ENCODE measurements at regions of chr12 and their contacts with region 1.

Region 1: GRCh38 chr12:69570545-69571399 is 14.5 kb upstream of the CCT2 start:
- DNase-seq: peak; percentile 67
- ATAC-seq: peak; percentile 86
- H3K4me3 Mint-ChIP-seq: no peak overlapping the region
- H3K27ac Mint-ChIP-seq: no peak overlapping the region
- H3K4me1 Mint-ChIP-seq: peaks cover 16% of the 10 kb centered on the region
- H3K27me3 Mint-ChIP-seq: no peaks in the 10 kb centered on the region

Region 2: GRCh38 chr12:69024413-69024812 is 546.4 kb before region 1 on chr12:
- CTCF ChIA-PET with region 1: no interaction called
- POLR2A ChIA-PET with region 1: no interaction called
- intact Hi-C with region 1: no loop called
- DNase-seq: no peak
- ATAC-seq: no peak
- H3K4me3 Mint-ChIP-seq: no peak overlapping the region
- H3K27ac Mint-ChIP-seq: no peak overlapping the region
- H3K4me1 Mint-ChIP-seq: no peaks in the 10 kb centered on the region
- H3K27me3 Mint-ChIP-seq: peaks cover 15% of the 10 kb centered on the region

Region 3: DNA sequence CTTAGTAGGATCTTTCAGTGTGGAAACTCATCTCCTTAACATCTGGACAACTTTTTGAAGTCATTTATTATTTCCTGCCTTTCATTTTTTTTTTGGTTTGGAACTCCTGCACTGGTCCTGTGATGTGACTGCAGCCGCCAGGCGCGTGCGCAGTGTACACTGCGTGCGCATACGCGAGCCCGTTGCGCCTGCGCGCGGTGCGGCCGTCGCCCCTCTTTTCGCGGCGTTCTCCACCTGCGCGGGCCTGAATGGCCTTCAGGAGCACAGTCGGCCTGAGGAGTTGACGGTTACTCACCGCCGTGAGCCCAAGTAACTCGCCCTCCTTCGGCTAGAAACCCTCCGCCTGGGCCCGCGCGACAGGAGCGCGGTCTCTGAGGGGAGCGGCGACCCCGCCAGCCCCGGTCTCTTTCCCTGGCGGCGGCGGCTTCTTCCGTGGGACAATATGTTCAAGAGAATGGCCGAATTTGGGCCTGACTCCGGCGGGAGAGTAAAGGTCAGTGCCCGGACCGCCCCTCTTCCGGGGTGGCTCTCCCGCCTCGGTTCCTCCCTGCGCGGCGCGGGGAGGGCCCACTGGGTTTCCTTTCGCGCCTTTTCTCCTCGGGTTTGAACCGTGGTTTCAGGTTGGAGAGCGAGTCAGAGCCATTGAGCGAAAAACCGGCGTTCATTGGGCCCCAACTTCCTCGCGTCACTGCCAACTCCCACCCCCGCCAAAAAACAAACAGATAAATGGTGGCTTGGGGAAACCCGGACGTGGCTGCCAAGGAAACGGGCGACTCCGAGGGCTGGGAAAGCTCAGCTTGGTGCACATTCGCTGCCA is 211.0 kb before region 1 on chr12 and contains the start of gene YEATS4:
- CTCF ChIA-PET with region 1: interaction called, 39 read pairs
- POLR2A ChIA-PET with region 1: no interaction called
- intact Hi-C with region 1: loop called (anchors 1 kb)
- DNase-seq: peak; percentile 92
- ATAC-seq: peak; percentile 83
- H3K4me3 Mint-ChIP-seq: peak within 1 kb of the TSS; percentile 91
- H3K27ac Mint-ChIP-seq: peak within 1 kb of the TSS; percentile 97
- H3K4me1 Mint-ChIP-seq: peaks cover 29% of the 10 kb centered on the region
- H3K27me3 Mint-ChIP-seq: peaks cover 1% of the 10 kb centered on the region
- total RNA-seq, gene YEATS4: 55.4 to 59.8 TPM

Region 4: GRCh38 chr12:69415471-69416275 is 155.1 kb before region 1 on chr12:
- CTCF ChIA-PET with region 1: interaction called, 3 read pairs
- POLR2A ChIA-PET with region 1: no interaction called
- intact Hi-C with region 1: loop called in 1 of 2 experiments (anchors 2 kb)
- DNase-seq: peak; percentile 21
- ATAC-seq: no peak
- H3K4me3 Mint-ChIP-seq: no peak overlapping the region
- H3K27ac Mint-ChIP-seq: no peak overlapping the region
- H3K4me1 Mint-ChIP-seq: no peaks in the 10 kb centered on the region
- H3K27me3 Mint-ChIP-seq: no peaks in the 10 kb centered on the region

Region 5: GRCh38 chr12:69553627-69554248 is 17.0 kb before region 1 on chr12:
- CTCF ChIA-PET with region 1: interaction called, 26 read pairs
- POLR2A ChIA-PET with region 1: interaction called, 3 read pairs
- intact Hi-C with region 1: no loop called
- DNase-seq: no peak
- ATAC-seq: no peak
- H3K4me3 Mint-ChIP-seq: no peak overlapping the region
- H3K27ac Mint-ChIP-seq: no peak overlapping the region
- H3K4me1 Mint-ChIP-seq: peaks cover 5% of the 10 kb centered on the region
- H3K27me3 Mint-ChIP-seq: no peaks in the 10 kb centered on the region

Region 6: GRCh38 chr12:69623970-69624369 is 53.2 kb after region 1 on chr12:
- CTCF ChIA-PET with region 1: no interaction called
- POLR2A ChIA-PET with region 1: no interaction called
- intact Hi-C with region 1: no loop called
- DNase-seq: no peak
- ATAC-seq: no peak
- H3K4me3 Mint-ChIP-seq: no peak overlapping the region
- H3K27ac Mint-ChIP-seq: no peak overlapping the region
- H3K4me1 Mint-ChIP-seq: no peaks in the 10 kb centered on the region
- H3K27me3 Mint-ChIP-seq: peaks cover 2% of the 10 kb centered on the region

Region 7: GRCh38 chr12:69639400-69640016 is 68.7 kb after region 1 on chr12:
- CTCF ChIA-PET with region 1: interaction called, 10 read pairs
- POLR2A ChIA-PET with region 1: no interaction called
- intact Hi-C with region 1: no loop called
- DNase-seq: peak; percentile 79
- ATAC-seq: peak; percentile 88
- H3K4me3 Mint-ChIP-seq: no peak overlapping the region
- H3K27ac Mint-ChIP-seq: no peak overlapping the region
- H3K4me1 Mint-ChIP-seq: no peaks in the 10 kb centered on the region
- H3K27me3 Mint-ChIP-seq: no peaks in the 10 kb centered on the region